Endothelial cell of umbilical vein (primary cell): ENCODE measurements at regions of chr12 and their contacts with region 1.

Region 1: DNA sequence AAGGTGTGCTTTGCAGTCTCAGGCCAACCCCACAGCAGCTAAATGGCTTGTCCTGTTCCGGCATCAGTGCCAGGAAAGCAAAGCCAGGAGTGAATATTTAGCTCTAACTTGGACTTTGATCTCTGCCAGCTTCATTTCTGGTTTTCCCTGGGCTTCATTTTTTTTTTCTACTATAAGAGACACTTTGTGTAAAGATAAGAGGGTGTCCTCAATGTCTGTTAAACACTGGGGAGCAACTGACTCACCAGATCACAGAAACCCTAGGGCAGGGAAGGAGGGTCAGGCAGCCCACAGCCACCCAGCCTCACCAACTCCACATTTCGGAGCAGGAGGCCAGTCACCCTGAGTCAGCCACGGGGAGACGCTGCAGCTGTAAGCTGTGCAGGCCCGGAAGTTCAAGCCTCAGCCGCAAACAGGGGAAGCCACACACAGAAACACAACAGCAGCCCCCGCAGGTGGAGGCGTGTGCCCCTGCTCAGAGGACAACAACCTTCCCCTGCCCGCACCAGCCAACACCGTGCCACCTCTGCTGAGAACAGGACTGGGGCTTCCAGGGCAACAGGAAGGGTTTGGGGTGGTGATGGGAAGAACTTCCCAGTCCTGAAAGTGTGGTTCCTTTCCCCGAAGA is 6.3 kb downstream of the TNFRSF1A start:
- DNase-seq: peak; percentile 85
- H3K4me3 ChIP-seq: peak overlapping the region in 2 of 3 experiments; percentile 1 to 37
- H3K27ac ChIP-seq: peak overlapping the region; percentile 92
- H3K4me1 ChIP-seq: peaks cover 63% of the 10 kb centered on the region
- H3K27me3 ChIP-seq: no peaks in the 10 kb centered on the region
- CTCF ChIP-seq: peak; percentile 70 to 71
- POLR2A ChIP-seq: no peak

Region 2: GRCh38 chr12:5371631-5372030 is 963.9 kb before region 1 on chr12:
- CTCF ChIA-PET with region 1: no interaction called
- POLR2A ChIA-PET with region 1: no interaction called
- dilution Hi-C with region 1: no loop called
- intact Hi-C with region 1: no loop called
- DNase-seq: no peak
- H3K4me3 ChIP-seq: no peak overlapping the region
- H3K27ac ChIP-seq: no peak overlapping the region
- H3K4me1 ChIP-seq: no peaks in the 10 kb centered on the region
- H3K27me3 ChIP-seq: no peaks in the 10 kb centered on the region
- CTCF ChIP-seq: no peak
- POLR2A ChIP-seq: no peak

Region 3: DNA sequence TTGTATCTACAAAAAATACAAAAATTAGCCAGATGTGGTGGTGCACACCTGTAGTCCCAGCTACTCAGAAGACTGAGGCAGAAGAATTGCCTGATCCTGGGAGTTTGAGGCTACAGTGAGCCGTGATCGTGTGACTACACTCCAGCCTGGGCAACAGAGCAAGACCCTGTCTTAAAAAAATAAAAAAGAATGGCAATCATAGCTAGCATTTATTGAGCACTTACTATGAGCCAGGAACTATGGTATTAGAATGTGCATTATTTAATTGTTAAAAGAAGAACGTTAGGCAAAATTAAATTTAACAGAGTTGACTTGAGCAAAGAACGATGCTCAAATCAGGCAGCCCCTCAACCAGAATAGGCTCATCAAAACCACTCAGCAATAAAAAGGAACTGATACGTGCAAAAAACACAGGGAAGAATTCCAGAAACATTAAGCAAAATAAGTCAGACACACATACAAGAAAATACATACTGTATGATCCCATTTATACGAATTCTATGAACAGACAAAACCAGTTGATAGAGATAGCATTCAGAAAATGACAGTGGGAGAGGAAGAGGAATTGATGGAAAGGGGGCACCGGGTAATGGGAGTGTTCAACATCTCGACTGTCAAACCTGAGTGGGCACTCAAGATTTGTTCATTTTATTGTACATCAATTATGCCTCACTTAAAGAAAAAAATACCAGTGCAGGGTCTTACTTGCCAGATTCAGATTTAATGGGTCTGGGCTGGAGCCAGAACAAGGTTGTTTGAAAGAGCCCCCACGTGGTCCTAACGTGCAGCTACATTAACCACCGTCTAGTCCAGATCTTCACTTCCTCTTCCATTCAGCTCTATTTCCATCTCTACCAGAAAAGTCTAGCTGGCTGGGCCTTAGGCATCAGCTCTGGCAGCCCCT is 31.8 kb after region 1 on chr12:
- CTCF ChIA-PET with region 1: interaction called, 46 read pairs
- POLR2A ChIA-PET with region 1: interaction called, 13 read pairs
- dilution Hi-C with region 1: no loop called
- intact Hi-C with region 1: loop called (anchors 1 kb)
- DNase-seq: peak; percentile 67
- H3K4me3 ChIP-seq: no peak overlapping the region
- H3K27ac ChIP-seq: no peak overlapping the region
- H3K4me1 ChIP-seq: peaks cover 31% of the 10 kb centered on the region
- H3K27me3 ChIP-seq: no peaks in the 10 kb centered on the region
- CTCF ChIP-seq: peak in 1 of 2 donors; percentile 49
- POLR2A ChIP-seq: no peak

Region 4: DNA sequence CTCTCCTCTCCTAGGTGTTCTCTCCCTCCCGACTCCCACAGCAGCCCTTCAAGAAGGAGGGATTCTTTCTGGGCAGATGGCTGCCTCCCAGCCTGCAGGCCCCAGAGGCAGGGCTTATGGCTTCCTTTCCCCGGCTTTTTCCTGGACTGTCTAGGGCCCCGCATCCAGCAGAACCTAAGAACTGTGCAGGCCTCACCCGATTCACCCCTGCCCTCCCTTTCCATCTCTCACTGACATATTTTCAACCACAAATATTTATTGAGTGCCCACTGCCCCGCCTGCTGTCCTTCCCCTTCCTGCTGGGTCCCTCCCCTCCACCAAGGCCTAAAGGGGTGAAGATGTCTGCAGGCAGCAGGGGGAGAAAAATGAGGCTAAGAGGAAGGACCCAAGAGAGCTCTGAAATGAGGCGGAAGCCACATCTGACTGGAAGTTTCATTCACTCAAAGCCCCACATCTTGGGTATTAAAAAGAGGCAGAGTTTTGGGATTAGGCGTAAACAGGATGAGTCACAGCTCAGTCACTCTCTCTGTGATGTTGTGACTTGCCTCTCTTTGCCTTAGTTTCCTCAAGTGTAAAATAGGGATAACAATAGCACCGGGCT is 36.9 kb after region 1 on chr12:
- CTCF ChIA-PET with region 1: interaction called, 46 read pairs
- POLR2A ChIA-PET with region 1: interaction called, 13 read pairs
- dilution Hi-C with region 1: no loop called
- intact Hi-C with region 1: loop called (anchors 1 kb)
- DNase-seq: peak; percentile 58
- H3K4me3 ChIP-seq: no peak overlapping the region
- H3K27ac ChIP-seq: peak overlapping the region; percentile 54
- H3K4me1 ChIP-seq: peaks cover 36% of the 10 kb centered on the region
- H3K27me3 ChIP-seq: no peaks in the 10 kb centered on the region
- CTCF ChIP-seq: no peak
- POLR2A ChIP-seq: no peak

Region 5: DNA sequence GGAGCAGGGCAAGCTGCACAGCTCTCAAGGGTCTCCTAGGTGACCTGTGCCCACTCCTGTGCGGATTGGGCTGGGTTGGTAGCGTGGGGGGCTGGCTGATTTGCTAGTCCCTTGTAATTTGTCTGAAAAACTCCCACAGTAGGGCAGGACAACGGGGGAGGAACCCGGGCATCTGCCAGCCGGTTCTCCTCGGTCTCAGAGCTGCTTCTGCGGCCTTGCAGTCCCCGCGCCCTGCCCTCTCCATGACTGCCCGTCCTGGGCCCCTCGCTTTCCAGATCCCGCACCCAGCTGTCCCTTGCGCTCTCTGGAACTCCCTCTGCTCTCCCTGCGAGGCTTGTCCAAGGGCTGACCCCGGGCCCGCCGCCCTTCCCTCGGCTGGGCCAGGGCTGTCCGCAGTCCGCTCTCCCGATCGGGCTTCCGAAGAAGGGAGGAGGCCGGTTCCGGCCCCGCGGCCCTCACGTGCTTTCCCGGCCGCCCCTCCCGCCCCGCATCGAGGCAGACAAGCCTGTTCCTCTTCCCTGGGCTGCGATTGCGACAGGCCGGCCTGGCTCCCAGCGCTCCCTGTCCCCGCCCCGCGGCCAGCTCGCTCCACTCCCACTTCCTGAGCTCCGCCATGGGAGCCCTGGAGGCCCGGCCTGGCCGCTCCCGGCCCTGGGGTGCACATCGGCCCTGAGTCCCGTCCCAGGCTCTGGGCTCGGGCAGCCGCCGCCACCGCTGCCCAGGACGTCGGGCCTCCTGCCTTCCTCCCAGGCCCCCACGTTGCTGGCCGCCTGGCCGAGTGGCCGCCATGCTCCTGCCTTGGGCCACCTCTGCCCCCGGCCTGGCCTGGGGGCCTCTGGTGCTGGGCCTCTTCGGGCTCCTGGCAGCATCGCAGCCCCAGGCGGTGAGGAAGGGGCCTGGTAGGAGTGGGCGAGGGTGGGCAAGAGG is 48.3 kb after region 1 on chr12 and contains the start of gene LTBR:
- CTCF ChIA-PET with region 1: interaction called, 20 read pairs
- POLR2A ChIA-PET with region 1: interaction called, 7 read pairs
- dilution Hi-C with region 1: no loop called
- intact Hi-C with region 1: loop called (anchors 1 kb)
- DNase-seq: peak; percentile 89
- H3K4me3 ChIP-seq: peak within 1 kb of the TSS; percentile 48 to 73 (median 72)
- H3K27ac ChIP-seq: peak within 1 kb of the TSS; percentile 81
- H3K4me1 ChIP-seq: peaks cover 20% of the 10 kb centered on the region
- H3K27me3 ChIP-seq: no peaks in the 10 kb centered on the region
- CTCF ChIP-seq: peak in 1 of 2 donors; percentile 5
- POLR2A ChIP-seq: peak; percentile 87
- total RNA-seq, gene LTBR: 84.1 and 102 TPM in 2 replicates

Region 6: DNA sequence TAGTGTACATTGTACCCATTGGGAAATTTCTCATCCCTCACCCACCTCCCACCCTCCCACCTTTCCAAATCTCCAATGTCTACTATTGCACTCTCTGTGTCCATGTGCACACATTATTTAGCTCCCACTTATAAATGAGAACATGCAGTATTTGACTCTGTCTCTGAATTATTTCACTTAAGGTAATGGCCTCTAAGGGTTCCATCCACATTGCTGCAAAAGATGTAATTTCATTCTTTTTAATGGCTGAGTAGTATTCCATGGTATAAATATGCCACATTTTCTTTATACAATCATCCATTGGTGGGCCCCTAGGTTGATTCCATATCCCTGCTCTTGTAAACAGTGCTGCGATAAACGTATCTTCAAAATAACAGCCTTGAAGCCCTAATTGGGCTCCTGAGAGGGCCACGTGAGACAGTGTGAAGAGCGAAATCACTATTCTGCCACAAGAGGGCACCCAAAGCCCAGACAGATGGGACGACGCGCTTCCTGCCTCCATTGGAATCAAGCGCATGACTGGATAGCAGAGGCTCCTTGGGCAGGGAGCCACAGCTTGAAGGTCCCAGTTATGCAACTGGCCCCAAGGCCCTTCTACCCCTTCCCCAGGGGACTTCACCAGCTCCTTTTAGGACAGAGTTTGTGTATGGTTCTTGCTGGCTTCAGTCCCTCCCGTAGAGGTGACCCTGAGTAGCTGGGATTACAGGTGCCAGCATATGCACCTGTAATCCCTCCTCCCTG is 87.9 kb after region 1 on chr12:
- CTCF ChIA-PET with region 1: interaction called, 11 read pairs
- POLR2A ChIA-PET with region 1: no interaction called
- dilution Hi-C with region 1: no loop called
- intact Hi-C with region 1: loop called (anchors 1 kb)
- DNase-seq: peak; percentile 92
- H3K4me3 ChIP-seq: no peak overlapping the region
- H3K27ac ChIP-seq: no peak overlapping the region
- H3K4me1 ChIP-seq: no peaks in the 10 kb centered on the region
- H3K27me3 ChIP-seq: no peaks in the 10 kb centered on the region
- CTCF ChIP-seq: peak; percentile 72 to 84
- POLR2A ChIP-seq: no peak

Region 7: DNA sequence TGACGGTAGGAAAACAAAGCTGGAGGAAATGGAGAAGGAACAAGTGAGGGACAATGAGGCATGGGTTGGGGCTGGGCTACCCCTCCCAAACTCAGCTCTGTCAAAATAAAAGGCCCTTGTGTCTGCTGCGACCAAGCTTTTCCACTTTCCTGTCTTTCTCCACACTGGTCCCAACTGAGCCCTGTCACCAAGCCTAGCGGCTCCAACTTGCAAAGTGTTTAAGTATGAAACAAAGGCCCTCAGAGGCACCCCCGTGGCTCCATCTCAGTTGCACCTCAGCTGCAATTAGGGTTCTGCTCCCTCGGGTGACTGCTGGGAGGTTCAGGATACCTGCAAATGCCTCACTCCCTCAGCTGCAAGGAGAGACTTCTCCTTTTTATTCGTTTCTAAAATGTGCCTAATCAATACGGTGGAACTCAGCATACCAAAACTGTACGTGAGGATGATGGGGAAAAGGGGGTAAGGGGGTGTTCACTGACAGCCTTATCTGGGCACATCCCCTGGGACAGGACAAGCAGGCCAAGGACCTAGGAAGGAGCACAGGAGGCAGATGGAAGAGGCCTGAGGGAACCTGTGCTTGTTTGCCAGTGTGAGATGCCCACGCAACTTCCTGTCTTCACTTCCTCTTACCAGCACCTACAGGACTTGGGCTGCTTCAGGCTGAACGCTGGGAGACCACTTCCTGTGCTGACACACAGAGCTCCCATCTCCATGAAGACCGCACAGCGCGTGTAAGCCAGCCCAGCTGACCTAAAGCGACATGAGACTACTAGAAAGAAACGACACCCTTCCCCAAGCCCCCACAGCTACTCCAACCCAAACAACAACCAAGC is 126.1 kb after region 1 on chr12:
- CTCF ChIA-PET with region 1: interaction called, 58 read pairs
- POLR2A ChIA-PET with region 1: interaction called, 4 read pairs
- dilution Hi-C with region 1: no loop called
- intact Hi-C with region 1: loop called (anchors 5 kb)
- DNase-seq: no peak
- H3K4me3 ChIP-seq: no peak overlapping the region
- H3K27ac ChIP-seq: no peak overlapping the region
- H3K4me1 ChIP-seq: peaks cover 13% of the 10 kb centered on the region
- H3K27me3 ChIP-seq: no peaks in the 10 kb centered on the region
- CTCF ChIP-seq: no peak
- POLR2A ChIP-seq: no peak

Region 8: DNA sequence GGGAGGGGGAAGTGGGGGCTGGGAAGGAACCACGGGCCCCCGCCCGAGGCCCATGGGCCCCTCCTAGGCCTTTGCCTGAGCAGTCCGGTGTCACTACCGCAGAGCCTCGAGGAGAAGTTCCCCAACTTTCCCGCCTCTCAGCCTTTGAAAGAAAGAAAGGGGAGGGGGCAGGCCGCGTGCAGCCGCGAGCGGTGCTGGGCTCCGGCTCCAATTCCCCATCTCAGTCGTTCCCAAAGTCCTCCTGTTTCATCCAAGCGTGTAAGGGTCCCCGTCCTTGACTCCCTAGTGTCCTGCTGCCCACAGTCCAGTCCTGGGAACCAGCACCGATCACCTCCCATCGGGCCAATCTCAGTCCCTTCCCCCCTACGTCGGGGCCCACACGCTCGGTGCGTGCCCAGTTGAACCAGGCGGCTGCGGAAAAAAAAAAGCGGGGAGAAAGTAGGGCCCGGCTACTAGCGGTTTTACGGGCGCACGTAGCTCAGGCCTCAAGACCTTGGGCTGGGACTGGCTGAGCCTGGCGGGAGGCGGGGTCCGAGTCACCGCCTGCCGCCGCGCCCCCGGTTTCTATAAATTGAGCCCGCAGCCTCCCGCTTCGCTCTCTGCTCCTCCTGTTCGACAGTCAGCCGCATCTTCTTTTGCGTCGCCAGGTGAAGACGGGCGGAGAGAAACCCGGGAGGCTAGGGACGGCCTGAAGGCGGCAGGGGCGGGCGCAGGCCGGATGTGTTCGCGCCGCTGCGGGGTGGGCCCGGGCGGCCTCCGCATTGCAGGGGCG is 198.5 kb after region 1 on chr12 and contains the start of gene GAPDH:
- CTCF ChIA-PET with region 1: interaction called, 15 read pairs
- POLR2A ChIA-PET with region 1: interaction called, 10 read pairs
- dilution Hi-C with region 1: no loop called
- intact Hi-C with region 1: loop called (anchors 1 kb)
- DNase-seq: peak; percentile 95
- H3K4me3 ChIP-seq: peak within 1 kb of the TSS; percentile 68 to 70 (median 68)
- H3K27ac ChIP-seq: peak within 1 kb of the TSS; percentile 73
- H3K4me1 ChIP-seq: peaks cover 34% of the 10 kb centered on the region
- H3K27me3 ChIP-seq: no peaks in the 10 kb centered on the region
- CTCF ChIP-seq: no peak
- POLR2A ChIP-seq: peak; percentile 99
- total RNA-seq, gene GAPDH: 4,245 and 4,648 TPM in 2 replicates

Region 9: DNA sequence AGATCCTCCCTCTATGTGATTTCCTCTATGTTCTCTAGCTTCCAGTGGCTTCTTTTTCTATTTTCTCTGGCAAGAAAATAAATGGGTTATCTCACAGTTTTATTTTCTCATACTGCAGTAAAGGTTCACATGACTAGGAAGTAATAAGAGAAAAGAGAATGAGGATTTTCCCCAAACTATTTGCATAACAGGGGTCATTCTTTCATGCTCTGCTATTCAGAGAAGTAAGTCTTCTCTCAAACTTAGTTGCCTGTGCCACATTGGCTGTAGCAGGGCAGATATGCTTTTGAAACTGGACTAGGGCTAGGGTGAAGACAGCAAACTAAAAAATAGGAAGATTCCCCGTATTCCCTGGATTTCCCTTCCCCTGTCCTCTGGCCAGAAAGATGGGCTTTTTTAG is 1025.7 kb after region 1 on chr12:
- CTCF ChIA-PET with region 1: no interaction called
- POLR2A ChIA-PET with region 1: no interaction called
- dilution Hi-C with region 1: no loop called
- intact Hi-C with region 1: no loop called
- DNase-seq: no peak
- H3K4me3 ChIP-seq: no peak overlapping the region
- H3K27ac ChIP-seq: no peak overlapping the region
- H3K4me1 ChIP-seq: no peaks in the 10 kb centered on the region
- H3K27me3 ChIP-seq: no peaks in the 10 kb centered on the region
- CTCF ChIP-seq: no peak
- POLR2A ChIP-seq: no peak